Activated naive CD4-positive, alpha-beta T cell treated with anti-CD3 and anti-CD28 coated beads, Interleukin-2, amount 10 ng/mL, durations not matched to agents 7 days and 5 days (primary cell): ENCODE measurements at regions of chr15 and their contacts with region 1.

Region 1: GRCh38 chr15:50315814-50316630 is 39.0 kb downstream of the GABPB1 start:
- DNase-seq: no peak
- H3K4me3 Mint-ChIP-seq: no peak overlapping the region
- H3K27ac Mint-ChIP-seq: no peak overlapping the region
- H3K4me1 Mint-ChIP-seq: peaks cover 18% of the 10 kb centered on the region
- H3K27me3 Mint-ChIP-seq: no peaks in the 10 kb centered on the region

Region 2: DNA sequence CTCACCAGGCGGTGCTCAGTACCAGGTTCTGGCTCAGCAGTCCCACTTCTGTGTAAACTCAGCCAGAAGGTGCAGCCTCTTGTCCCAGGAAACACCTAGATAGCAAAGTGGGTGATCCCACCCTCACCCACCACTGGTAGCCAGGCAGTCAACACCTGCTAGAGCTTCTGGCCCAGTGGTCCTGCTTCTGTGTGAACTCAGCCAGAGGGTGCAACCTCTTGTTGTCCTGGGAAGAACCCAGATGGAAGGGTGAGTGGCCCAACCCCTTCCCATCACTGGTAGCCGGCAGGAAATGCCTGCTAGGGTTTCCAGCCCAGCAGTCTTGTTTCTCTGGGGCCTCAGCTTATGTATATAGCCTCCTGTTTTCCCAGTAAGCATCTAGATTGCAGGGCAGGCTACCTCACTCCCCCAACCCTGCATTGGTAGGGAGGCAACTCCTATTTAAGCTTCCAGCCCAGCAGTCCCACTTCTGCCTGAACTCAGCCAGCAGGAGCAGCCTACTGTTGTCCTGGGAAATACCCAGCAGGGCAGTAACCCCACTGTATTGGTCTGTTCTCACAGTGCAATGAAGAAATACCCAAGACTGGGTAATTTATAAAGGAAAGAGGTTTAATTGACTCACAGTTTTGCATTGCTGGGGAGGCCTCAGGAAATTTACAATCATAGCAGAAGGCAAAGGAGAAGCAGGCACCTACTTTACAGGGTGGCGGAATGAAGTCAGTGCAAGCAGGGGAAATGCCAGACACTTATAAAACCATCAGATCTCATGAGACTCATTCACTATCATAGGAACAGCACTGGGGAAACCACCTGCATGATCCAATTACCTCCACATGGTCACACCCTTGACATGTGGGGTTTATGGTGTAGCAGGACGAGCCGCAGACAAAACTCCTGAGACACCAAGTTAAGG is 584.6 kb before region 1 on chr15:
- CTCF ChIA-PET with region 1: no interaction called
- DNase-seq: no peak
- H3K4me3 Mint-ChIP-seq: no peak overlapping the region
- H3K27ac Mint-ChIP-seq: no peak overlapping the region
- H3K4me1 Mint-ChIP-seq: no peaks in the 10 kb centered on the region
- H3K27me3 Mint-ChIP-seq: no peaks in the 10 kb centered on the region

Region 3: GRCh38 chr15:49904296-49904695 is 411.7 kb before region 1 on chr15:
- CTCF ChIA-PET with region 1: no interaction called
- DNase-seq: no peak
- H3K4me3 Mint-ChIP-seq: no peak overlapping the region
- H3K27ac Mint-ChIP-seq: no peak overlapping the region
- H3K4me1 Mint-ChIP-seq: no peaks in the 10 kb centered on the region
- H3K27me3 Mint-ChIP-seq: no peaks in the 10 kb centered on the region

Region 4: GRCh38 chr15:50145451-50145872 is 170.6 kb before region 1 on chr15:
- CTCF ChIA-PET with region 1: interaction called, 14 read pairs
- DNase-seq: no peak
- H3K4me3 Mint-ChIP-seq: no peak overlapping the region
- H3K27ac Mint-ChIP-seq: no peak overlapping the region
- H3K4me1 Mint-ChIP-seq: peaks cover 2% of the 10 kb centered on the region
- H3K27me3 Mint-ChIP-seq: peaks cover 4% of the 10 kb centered on the region

Region 5: GRCh38 chr15:50182219-50183013 is 133.6 kb before region 1 on chr15:
- CTCF ChIA-PET with region 1: interaction called, 43 read pairs
- DNase-seq: peak; percentile 72
- H3K4me3 Mint-ChIP-seq: peak overlapping the region; percentile 92
- H3K27ac Mint-ChIP-seq: peak overlapping the region; percentile 83
- H3K4me1 Mint-ChIP-seq: peaks cover 26% of the 10 kb centered on the region
- H3K27me3 Mint-ChIP-seq: peaks cover 20% of the 10 kb centered on the region

Region 6: GRCh38 chr15:50241684-50242450 is 74.2 kb before region 1 on chr15:
- CTCF ChIA-PET with region 1: interaction called, 14 read pairs
- DNase-seq: no peak
- H3K4me3 Mint-ChIP-seq: no peak overlapping the region
- H3K27ac Mint-ChIP-seq: no peak overlapping the region
- H3K4me1 Mint-ChIP-seq: peaks cover 6% of the 10 kb centered on the region
- H3K27me3 Mint-ChIP-seq: no peaks in the 10 kb centered on the region

Region 7: DNA sequence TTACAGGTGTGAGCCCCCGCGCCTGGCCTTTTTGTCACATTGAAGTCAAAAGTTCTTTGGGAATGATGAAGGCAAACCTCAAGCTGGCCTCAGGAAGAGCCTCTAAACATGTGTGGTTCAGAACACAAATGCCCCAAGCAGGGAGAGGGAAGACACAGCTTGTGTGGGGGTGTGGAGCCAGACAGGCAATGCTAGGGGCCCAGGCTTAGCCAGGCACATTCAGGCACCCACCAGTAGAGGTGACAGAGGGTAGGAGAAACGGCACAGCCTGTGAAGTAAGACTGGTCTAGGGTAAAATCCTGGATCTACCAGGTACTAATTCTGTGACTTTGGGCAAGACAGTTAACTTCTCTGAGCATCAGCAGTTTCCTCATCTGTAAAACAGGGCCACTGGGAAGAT is 54.0 kb before region 1 on chr15:
- CTCF ChIA-PET with region 1: interaction called, 13 read pairs
- DNase-seq: no peak
- H3K4me3 Mint-ChIP-seq: no peak overlapping the region
- H3K27ac Mint-ChIP-seq: no peak overlapping the region
- H3K4me1 Mint-ChIP-seq: peaks cover 43% of the 10 kb centered on the region
- H3K27me3 Mint-ChIP-seq: peaks cover under 1% of the 10 kb centered on the region